RWPE1 (cell line): ENCODE measurements at regions of chr10 and their contacts with region 1.

Region 1: DNA sequence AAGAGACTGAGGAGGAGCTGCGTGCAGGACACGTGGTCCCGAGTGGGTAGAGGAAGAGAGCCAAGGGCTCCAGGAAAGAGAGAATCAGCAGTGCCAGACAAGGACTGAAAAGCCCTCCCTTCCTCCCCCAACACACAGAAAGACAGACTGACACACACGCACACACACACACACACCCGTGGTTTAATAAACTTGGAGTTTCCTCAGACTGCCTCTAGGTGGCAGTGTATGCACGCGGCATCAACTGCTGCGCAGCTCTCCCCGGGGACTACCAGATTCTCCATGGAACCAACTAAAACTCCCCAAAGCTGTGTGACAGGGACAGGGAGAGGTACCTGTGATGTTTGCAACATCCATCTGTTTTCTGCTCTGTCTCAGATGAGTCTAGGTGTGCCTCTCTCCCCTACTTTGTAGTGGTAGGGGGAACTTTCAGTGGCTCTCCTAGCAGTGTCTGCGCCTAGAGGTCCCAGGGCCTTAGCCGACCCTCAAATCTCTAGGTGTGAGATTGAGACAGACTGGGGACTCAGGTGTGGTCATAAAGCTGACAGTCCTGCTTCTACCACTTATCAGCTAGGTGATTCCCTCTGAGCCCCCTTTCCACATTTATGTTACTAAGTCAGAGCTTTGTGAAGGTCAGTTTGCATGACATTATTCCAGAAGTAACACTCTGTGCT is 9.3 kb upstream of the TSPAN14 start:
- DNase-seq: peak; percentile 62
- H3K27ac ChIP-seq: 0 out of 2 replicates have a peak overlapping the region, but pooled peaks have one; percentile 21
- CTCF ChIP-seq: peak; percentile 83

Region 2: GRCh38 chr10:80382989-80383388 is 61.8 kb before region 1 on chr10:
- CTCF ChIA-PET with region 1: interaction called, 15 read pairs
- POLR2A ChIA-PET with region 1: no interaction called
- DNase-seq: peak; percentile 71
- H3K27ac ChIP-seq: no peak overlapping the region
- CTCF ChIP-seq: peak; percentile 71